Activated CD4-positive, alpha-beta T cell treated with anti-CD3 and anti-CD28 coated beads, Interleukin-2, amount 10 ng/mL, durations not matched to agents 7 days and 5 days (primary cell): ENCODE measurements at regions of chr3 and their contacts with region 1.

Region 1: GRCh38 chr3:50486219-50486888 is 17.1 kb downstream of the CACNA2D2 start:
- DNase-seq: no peak
- H3K4me3 Mint-ChIP-seq: no peak overlapping the region
- H3K27ac Mint-ChIP-seq: no peak overlapping the region
- H3K4me1 Mint-ChIP-seq: no peaks in the 10 kb centered on the region
- H3K27me3 Mint-ChIP-seq: no peaks in the 10 kb centered on the region

Region 2: GRCh38 chr3:50474717-50475116 is 11.6 kb before region 1 on chr3:
- CTCF ChIA-PET with region 1: interaction called, 11 read pairs
- POLR2A ChIA-PET with region 1: no interaction called
- DNase-seq: no peak
- H3K4me3 Mint-ChIP-seq: no peak overlapping the region
- H3K27ac Mint-ChIP-seq: no peak overlapping the region
- H3K4me1 Mint-ChIP-seq: peaks cover 4% of the 10 kb centered on the region
- H3K27me3 Mint-ChIP-seq: no peaks in the 10 kb centered on the region